ENCODE measurements at regions of chr22 and their contacts with region 1.

Region 1: GRCh38 chr22:27880778-27881394 is 38.2 kb downstream of the PITPNB start:
- ATAC-seq: peak; percentile 40 to 73 (median 54)
- H3K4me3 ChIP-seq: no peak overlapping the region
- H3K27ac ChIP-seq: peak overlapping the region in 1 of 2 donors; percentile 4
- H3K4me1 ChIP-seq: peaks cover 39 to 49% of the 10 kb centered on the region in 2 donors

Region 2: GRCh38 chr22:27299181-27300085 is 581.5 kb before region 1 on chr22:
- in situ Hi-C with region 1: no loop called
- ATAC-seq: peak in 7 of 8 experiments; percentile 55 to 92 (median 87)
- H3K4me3 ChIP-seq: peak overlapping the region in 1 of 5 donors; percentile 11
- H3K27ac ChIP-seq: peak overlapping the region; percentile 58 to 62
- H3K4me1 ChIP-seq: peaks cover 47 to 55% of the 10 kb centered on the region in 2 donors

Region 3: DNA sequence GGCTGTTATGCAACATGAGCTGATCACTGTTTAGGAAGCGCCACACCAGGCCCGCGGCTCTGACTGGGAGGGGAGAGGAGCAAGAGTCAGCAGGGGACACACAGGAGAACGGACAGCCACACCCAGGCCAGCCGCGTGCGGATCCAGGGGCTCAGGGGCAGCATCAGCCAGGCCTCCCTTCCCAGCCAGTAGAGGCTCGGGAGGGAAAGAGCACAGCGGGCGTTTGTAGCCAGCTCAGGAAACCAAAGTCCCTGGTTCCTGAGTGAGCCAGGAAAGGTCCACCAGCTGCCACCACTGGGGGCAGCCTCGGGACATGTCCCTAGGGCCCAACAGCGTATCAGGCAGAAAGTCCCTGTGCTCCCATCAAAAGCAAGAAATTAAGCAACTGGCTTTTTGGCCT is 110.0 kb after region 1 on chr22:
- in situ Hi-C with region 1: loop called in 2 of 9 experiments (anchors 10 to 25 kb)
- ATAC-seq: peak in 7 of 8 experiments; percentile 40 to 95 (median 64)
- H3K4me3 ChIP-seq: no peak overlapping the region
- H3K27ac ChIP-seq: no peak overlapping the region
- H3K4me1 ChIP-seq: no peaks in the 10 kb centered on the region

Region 4: GRCh38 chr22:28009272-28009827 is 128.5 kb after region 1 on chr22:
- in situ Hi-C with region 1: loop called in 2 of 9 experiments (anchors 25 kb)
- ATAC-seq: peak; percentile 82 to 95 (median 90)
- H3K4me3 ChIP-seq: no peak overlapping the region
- H3K27ac ChIP-seq: no peak overlapping the region
- H3K4me1 ChIP-seq: peaks cover 4 to 5% of the 10 kb centered on the region in 2 donors

Measured in motor neuron (in vitro differentiated cells).